ENCODE measurements at regions of chr10 and their contacts with region 1.

Region 1: DNA sequence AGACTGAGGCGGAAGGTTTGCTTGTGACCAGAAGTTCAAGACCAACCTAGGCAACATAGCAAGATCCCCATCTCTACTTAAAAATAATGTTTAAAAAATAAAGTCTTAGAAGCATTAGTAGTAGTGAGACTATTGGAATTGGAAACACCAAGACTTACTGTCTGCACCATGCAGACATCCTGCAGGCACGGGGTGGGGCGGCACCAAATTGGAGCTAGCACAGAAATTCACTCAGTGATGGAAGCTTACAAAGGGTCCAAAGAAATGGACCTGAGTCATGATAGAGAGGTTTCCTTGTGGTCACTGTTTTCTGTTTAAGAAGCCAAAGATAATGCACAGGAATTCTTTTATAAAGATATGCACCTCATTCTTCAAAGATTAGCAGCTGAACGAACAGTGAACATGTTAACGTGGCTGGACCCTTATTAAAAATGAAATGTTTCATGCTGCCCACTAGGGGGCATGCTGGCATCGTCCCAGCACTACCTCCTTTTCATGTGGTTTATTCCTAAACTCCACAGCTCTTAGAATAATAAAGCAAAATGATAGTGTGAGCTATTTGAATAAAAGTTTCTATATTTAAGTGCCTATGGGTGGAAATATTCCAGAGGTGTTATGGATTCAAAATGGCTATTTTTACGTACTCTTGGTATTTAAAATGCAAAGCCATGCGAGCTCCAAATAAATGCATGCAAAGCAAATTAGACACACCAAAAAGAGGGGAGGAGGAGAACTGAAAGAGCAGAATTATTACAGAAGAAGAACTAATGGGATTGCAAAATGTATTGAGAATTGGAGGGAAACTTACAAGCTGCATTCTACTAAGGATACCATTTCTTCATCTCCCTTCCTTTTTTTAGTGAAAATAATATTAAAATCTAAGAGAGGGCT is 28.6 kb downstream of the PDSS1 start:
- DNase-seq: peak; percentile 74
- ATAC-seq: peak; percentile 72
- H3K4me3 ChIP-seq: no peak overlapping the region
- H3K4me3 Mint-ChIP-seq: no peak overlapping the region
- H3K27ac ChIP-seq: no peak overlapping the region
- H3K27ac Mint-ChIP-seq: no peak overlapping the region
- H3K4me1 ChIP-seq: peaks cover 0 to 15% of the 10 kb centered on the region in 2 donors
- H3K4me1 Mint-ChIP-seq: peaks cover 10% of the 10 kb centered on the region
- H3K27me3 ChIP-seq: no peaks in the 10 kb centered on the region
- H3K27me3 Mint-ChIP-seq: no peaks in the 10 kb centered on the region
- CTCF ChIP-seq: peak; percentile 98

Region 2: GRCh38 chr10:26334932-26335573 is 391.0 kb before region 1 on chr10:
- CTCF ChIA-PET with region 1: interaction called, 30 read pairs
- POLR2A ChIA-PET with region 1: no interaction called
- intact Hi-C with region 1: loop called (anchors 1 kb)
- DNase-seq: peak; percentile 84
- ATAC-seq: peak; percentile 91
- H3K4me3 ChIP-seq: peak overlapping the region; percentile 45 to 66 (median 59)
- H3K4me3 Mint-ChIP-seq: peak overlapping the region; percentile 87
- H3K27ac ChIP-seq: no peak overlapping the region
- H3K27ac Mint-ChIP-seq: peak overlapping the region; percentile 69
- H3K4me1 ChIP-seq: peaks cover 5% of the 10 kb centered on the region in 2 donors
- H3K4me1 Mint-ChIP-seq: peaks cover 6% of the 10 kb centered on the region
- H3K27me3 ChIP-seq: no peaks in the 10 kb centered on the region
- H3K27me3 Mint-ChIP-seq: no peaks in the 10 kb centered on the region
- CTCF ChIP-seq: peak; percentile 95

Region 3: DNA sequence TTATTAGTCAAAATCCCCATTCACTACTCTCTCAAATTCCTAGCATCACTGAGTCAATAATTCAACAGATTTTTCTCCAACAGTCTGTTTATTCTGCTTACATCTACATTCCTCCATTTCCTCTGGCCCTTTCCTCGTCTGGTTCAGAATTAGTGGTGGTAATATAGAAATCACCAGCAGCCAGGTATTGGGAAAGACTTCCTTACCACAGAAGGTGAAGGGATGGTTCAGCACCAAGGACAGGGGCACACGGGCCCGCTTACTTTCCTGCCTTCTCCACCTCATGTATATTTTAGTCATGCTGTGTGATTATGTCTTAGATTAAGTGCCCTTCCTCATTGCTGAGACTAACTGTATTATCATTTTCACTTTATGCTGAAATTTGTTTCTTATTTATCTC is 358.3 kb before region 1 on chr10:
- CTCF ChIA-PET with region 1: no interaction called
- POLR2A ChIA-PET with region 1: no interaction called
- intact Hi-C with region 1: no loop called
- DNase-seq: peak; percentile 59
- ATAC-seq: peak; percentile 75
- H3K4me3 ChIP-seq: no peak overlapping the region
- H3K4me3 Mint-ChIP-seq: peak overlapping the region; percentile 42
- H3K27ac ChIP-seq: no peak overlapping the region
- H3K27ac Mint-ChIP-seq: no peak overlapping the region
- H3K4me1 ChIP-seq: peaks cover 4 to 6% of the 10 kb centered on the region in 2 donors
- H3K4me1 Mint-ChIP-seq: peaks cover 12% of the 10 kb centered on the region
- H3K27me3 ChIP-seq: peaks cover 0 to 2% (median 0%) of the 10 kb centered on the region in 4 experiments
- H3K27me3 Mint-ChIP-seq: peaks cover under 1% of the 10 kb centered on the region
- CTCF ChIP-seq: no peak

Region 4: DNA sequence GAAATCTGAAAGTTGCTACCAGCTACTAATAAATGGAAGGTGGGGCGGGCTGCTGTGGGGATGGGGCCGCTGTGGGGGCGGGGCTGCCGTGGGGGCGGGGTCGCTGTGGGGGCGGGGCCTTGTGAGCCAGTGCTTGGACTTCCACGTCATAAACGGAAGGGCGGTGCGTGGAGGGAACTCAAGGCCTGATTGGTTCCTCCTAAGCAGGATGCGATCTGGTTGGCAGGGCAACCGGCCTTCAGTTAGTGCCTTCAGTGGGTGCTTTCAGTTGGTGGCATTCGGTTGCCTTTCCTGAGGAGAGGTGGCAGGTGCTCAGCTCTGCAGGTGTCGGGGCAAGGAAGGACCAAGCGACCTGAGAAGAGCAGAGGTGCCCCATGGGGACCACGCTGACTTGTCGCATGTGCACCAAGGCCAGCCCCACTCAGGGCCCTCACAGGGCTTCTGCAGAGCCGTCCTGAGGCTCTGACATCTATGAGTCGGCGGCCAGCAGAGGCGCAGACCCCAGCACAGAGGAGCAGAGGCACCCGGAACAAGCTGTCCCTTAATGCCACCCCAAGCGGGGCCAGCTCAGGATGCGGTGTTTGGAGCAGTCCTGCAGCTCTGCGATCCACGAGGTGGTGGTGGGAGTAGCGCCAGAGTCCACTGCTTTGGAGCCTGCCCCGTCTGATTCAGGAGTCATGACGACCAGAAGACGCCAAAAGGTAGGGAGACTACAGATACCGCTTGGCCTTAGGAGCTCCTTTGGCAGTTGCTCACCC is 83.0 kb before region 1 on chr10:
- CTCF ChIA-PET with region 1: no interaction called
- POLR2A ChIA-PET with region 1: no interaction called
- intact Hi-C with region 1: no loop called
- DNase-seq: no peak
- ATAC-seq: no peak
- H3K4me3 ChIP-seq: no peak overlapping the region
- H3K4me3 Mint-ChIP-seq: no peak overlapping the region
- H3K27ac ChIP-seq: no peak overlapping the region
- H3K27ac Mint-ChIP-seq: no peak overlapping the region
- H3K4me1 ChIP-seq: no peaks in the 10 kb centered on the region
- H3K4me1 Mint-ChIP-seq: no peaks in the 10 kb centered on the region
- H3K27me3 ChIP-seq: no peaks in the 10 kb centered on the region
- H3K27me3 Mint-ChIP-seq: no peaks in the 10 kb centered on the region
- CTCF ChIP-seq: no peak

Region 5: GRCh38 chr10:26737730-26738129 is 11.6 kb after region 1 on chr10:
- CTCF ChIA-PET with region 1: interaction called, 19 read pairs
- POLR2A ChIA-PET with region 1: no interaction called
- intact Hi-C with region 1: no loop called
- DNase-seq: peak; percentile 86
- ATAC-seq: peak; percentile 69
- H3K4me3 ChIP-seq: no peak overlapping the region
- H3K4me3 Mint-ChIP-seq: peak overlapping the region; percentile 52
- H3K27ac ChIP-seq: peak overlapping the region; percentile 87
- H3K27ac Mint-ChIP-seq: peak overlapping the region; percentile 89
- H3K4me1 ChIP-seq: peaks cover 36 to 49% of the 10 kb centered on the region in 2 donors
- H3K4me1 Mint-ChIP-seq: peaks cover 50% of the 10 kb centered on the region
- H3K27me3 ChIP-seq: no peaks in the 10 kb centered on the region
- H3K27me3 Mint-ChIP-seq: no peaks in the 10 kb centered on the region
- CTCF ChIP-seq: no peak

Region 6: DNA sequence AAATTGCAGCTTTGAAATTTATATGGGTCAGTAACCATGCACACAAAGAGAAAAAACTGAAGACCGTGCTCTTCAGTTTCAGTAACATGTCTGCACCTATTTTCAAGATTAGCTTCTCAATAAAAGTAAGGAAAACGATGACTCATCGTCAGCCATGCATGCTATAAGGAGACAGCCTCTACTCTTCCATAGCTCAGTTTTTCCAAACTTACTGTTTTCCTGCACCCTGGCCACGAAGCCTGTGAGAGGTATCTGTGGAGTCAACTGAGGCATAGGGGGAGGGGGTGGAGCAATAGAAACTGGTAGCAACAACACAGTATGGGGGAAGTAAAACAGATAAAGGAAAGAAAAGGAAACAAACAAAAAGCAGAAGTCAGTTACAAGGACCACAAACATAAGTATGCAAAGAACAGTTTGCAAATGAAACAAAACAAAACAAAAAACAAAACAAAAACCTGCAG is 29.4 kb after region 1 on chr10:
- CTCF ChIA-PET with region 1: interaction called, 11 read pairs
- POLR2A ChIA-PET with region 1: no interaction called
- intact Hi-C with region 1: no loop called
- DNase-seq: peak; percentile 69
- ATAC-seq: peak; percentile 74
- H3K4me3 ChIP-seq: peak overlapping the region in 1 of 5 experiments; percentile 30
- H3K4me3 Mint-ChIP-seq: peak overlapping the region; percentile 51
- H3K27ac ChIP-seq: peak overlapping the region; percentile 1 to 28
- H3K27ac Mint-ChIP-seq: peak overlapping the region; percentile 84
- H3K4me1 ChIP-seq: peaks cover 7 to 12% of the 10 kb centered on the region in 2 donors
- H3K4me1 Mint-ChIP-seq: peaks cover 20% of the 10 kb centered on the region
- H3K27me3 ChIP-seq: no peaks in the 10 kb centered on the region
- H3K27me3 Mint-ChIP-seq: no peaks in the 10 kb centered on the region
- CTCF ChIP-seq: no peak

Region 7: DNA sequence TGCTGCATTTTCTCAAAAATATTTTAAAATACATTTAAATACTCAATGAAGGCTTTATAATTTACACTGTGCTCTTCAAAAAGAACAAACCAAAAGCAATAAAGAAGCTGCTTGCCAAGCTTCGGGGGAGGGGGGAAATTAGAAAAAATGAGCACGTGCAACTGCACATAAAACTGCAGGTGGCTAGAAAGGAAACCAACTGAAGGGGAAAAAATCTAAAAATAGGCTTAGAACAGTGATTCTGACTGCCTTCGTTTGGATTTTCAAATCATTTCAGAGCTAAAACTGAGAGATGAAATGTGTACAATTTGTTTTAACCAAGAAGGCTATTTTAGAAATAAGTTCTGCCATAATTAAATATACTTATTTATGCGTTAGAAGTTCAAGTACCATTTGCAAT is 73.3 kb after region 1 on chr10:
- CTCF ChIA-PET with region 1: interaction called, 12 read pairs
- POLR2A ChIA-PET with region 1: no interaction called
- intact Hi-C with region 1: no loop called
- DNase-seq: peak; percentile 80
- ATAC-seq: peak; percentile 64
- H3K4me3 ChIP-seq: peak overlapping the region in 2 of 5 experiments; percentile 25 to 59
- H3K4me3 Mint-ChIP-seq: peak overlapping the region; percentile 69
- H3K27ac ChIP-seq: peak overlapping the region; percentile 67 to 81
- H3K27ac Mint-ChIP-seq: peak overlapping the region; percentile 72
- H3K4me1 ChIP-seq: peaks cover 70 to 83% of the 10 kb centered on the region in 2 donors
- H3K4me1 Mint-ChIP-seq: peaks cover 81% of the 10 kb centered on the region
- H3K27me3 ChIP-seq: no peaks in the 10 kb centered on the region
- H3K27me3 Mint-ChIP-seq: no peaks in the 10 kb centered on the region
- CTCF ChIP-seq: no peak

Region 8: GRCh38 chr10:26869528-26869927 is 143.4 kb after region 1 on chr10:
- CTCF ChIA-PET with region 1: interaction called, 452 read pairs
- POLR2A ChIA-PET with region 1: interaction called, 4 read pairs
- intact Hi-C with region 1: no loop called
- DNase-seq: no peak
- ATAC-seq: peak; percentile 17
- H3K4me3 ChIP-seq: no peak overlapping the region
- H3K4me3 Mint-ChIP-seq: peak overlapping the region; percentile 50
- H3K27ac ChIP-seq: no peak overlapping the region
- H3K27ac Mint-ChIP-seq: no peak overlapping the region
- H3K4me1 ChIP-seq: peaks cover 3 to 8% of the 10 kb centered on the region in 2 donors
- H3K4me1 Mint-ChIP-seq: peaks cover 6% of the 10 kb centered on the region
- H3K27me3 ChIP-seq: no peaks in the 10 kb centered on the region
- H3K27me3 Mint-ChIP-seq: peaks cover 6% of the 10 kb centered on the region
- CTCF ChIP-seq: no peak

Region 9: DNA sequence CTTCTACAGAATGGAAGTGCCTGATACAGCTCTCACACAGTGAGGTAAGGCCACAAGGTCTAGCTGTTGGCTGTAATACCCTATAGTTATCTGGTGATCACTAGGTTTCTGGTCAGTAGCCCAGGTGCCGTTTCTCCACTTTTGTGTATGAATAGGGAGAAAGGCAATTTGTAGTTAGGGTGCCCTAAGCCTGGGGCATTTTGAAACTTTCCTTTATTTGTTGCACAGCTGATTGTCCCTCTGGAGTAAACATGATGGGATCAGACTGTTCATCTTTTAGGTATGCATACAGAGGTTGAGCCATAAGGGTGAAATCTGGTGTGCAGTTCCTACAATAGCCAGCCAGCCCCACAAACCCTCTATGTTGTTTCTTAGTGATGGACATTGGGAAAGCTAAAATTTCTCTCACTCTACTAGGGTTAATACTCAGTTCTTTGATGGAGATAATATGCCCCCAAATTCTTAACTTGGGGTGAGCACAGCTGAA is 261.8 kb after region 1 on chr10:
- CTCF ChIA-PET with region 1: no interaction called
- POLR2A ChIA-PET with region 1: no interaction called
- intact Hi-C with region 1: no loop called
- DNase-seq: no peak
- ATAC-seq: no peak
- H3K4me3 ChIP-seq: no peak overlapping the region
- H3K4me3 Mint-ChIP-seq: no peak overlapping the region
- H3K27ac ChIP-seq: no peak overlapping the region
- H3K27ac Mint-ChIP-seq: no peak overlapping the region
- H3K4me1 ChIP-seq: no peaks in the 10 kb centered on the region
- H3K4me1 Mint-ChIP-seq: no peaks in the 10 kb centered on the region
- H3K27me3 ChIP-seq: no peaks in the 10 kb centered on the region
- H3K27me3 Mint-ChIP-seq: no peaks in the 10 kb centered on the region
- CTCF ChIP-seq: no peak

Region 10: GRCh38 chr10:27003432-27003831 is 277.4 kb after region 1 on chr10:
- CTCF ChIA-PET with region 1: no interaction called
- POLR2A ChIA-PET with region 1: no interaction called
- intact Hi-C with region 1: no loop called
- DNase-seq: no peak
- ATAC-seq: no peak
- H3K4me3 ChIP-seq: no peak overlapping the region
- H3K4me3 Mint-ChIP-seq: no peak overlapping the region
- H3K27ac ChIP-seq: no peak overlapping the region
- H3K27ac Mint-ChIP-seq: no peak overlapping the region
- H3K4me1 ChIP-seq: no peaks in the 10 kb centered on the region
- H3K4me1 Mint-ChIP-seq: no peaks in the 10 kb centered on the region
- H3K27me3 ChIP-seq: no peaks in the 10 kb centered on the region
- H3K27me3 Mint-ChIP-seq: no peaks in the 10 kb centered on the region
- CTCF ChIP-seq: no peak